Heart left ventricle (tissue), 16 donors: ENCODE measurements at regions of chr5 and their contacts with region 1.

Region 1: DNA sequence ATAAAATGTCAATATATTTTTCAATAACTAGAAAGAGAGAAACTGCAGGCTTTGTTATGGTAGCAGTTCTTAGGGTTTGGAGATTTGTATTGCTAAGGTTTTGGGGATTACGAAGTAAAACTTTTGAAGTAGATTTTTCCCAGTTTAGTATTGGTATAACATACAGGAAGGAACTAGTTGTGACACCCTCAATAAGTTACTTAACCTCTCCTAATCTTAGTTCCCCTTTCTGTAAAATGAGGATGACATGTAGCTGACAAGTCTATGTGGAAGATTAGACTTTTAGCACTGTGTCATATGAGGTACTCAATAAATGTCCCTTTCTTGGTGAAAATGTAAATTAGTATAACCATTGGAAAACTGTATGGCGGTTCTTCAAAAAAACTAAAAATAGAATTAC is 73.4 kb upstream of the ATG10 start:
- DNase-seq: no peak
- ATAC-seq: peak in 2 of 4 donors; percentile 44 to 56
- H3K4me3 ChIP-seq: no peak overlapping the region
- H3K27ac ChIP-seq: peak overlapping the region in 1 of 12 donors; percentile 19
- H3K4me1 ChIP-seq: peaks cover 0 to 5% (median 0%) of the 10 kb centered on the region in 12 donors
- H3K27me3 ChIP-seq: no peaks in the 10 kb centered on the region
- CTCF ChIP-seq: no peak
- POLR2A ChIP-seq: no peak

Region 2: GRCh38 chr5:81525690-81526089 is 372.7 kb before region 1 on chr5:
- intact Hi-C with region 1: no loop called
- DNase-seq: no peak
- ATAC-seq: no peak
- H3K4me3 ChIP-seq: no peak overlapping the region
- H3K27ac ChIP-seq: no peak overlapping the region
- H3K4me1 ChIP-seq: peaks cover 0 to 27% (median 6%) of the 10 kb centered on the region in 12 donors
- H3K27me3 ChIP-seq: no peaks in the 10 kb centered on the region
- CTCF ChIP-seq: no peak
- POLR2A ChIP-seq: no peak

Region 3: GRCh38 chr5:82031220-82032119 is 133.1 kb after region 1 on chr5:
- intact Hi-C with region 1: loop called in 1 of 10 experiments (anchors 10 kb)
- DNase-seq: peak in 1 of 5 donors; percentile 25
- ATAC-seq: peak in 3 of 4 donors; percentile 18 to 54 (median 47)
- H3K4me3 ChIP-seq: no peak overlapping the region
- H3K27ac ChIP-seq: no peak overlapping the region
- H3K4me1 ChIP-seq: peaks cover 0 to 10% (median 4%) of the 10 kb centered on the region in 12 donors
- H3K27me3 ChIP-seq: no peaks in the 10 kb centered on the region
- CTCF ChIP-seq: no peak
- POLR2A ChIP-seq: no peak